Endothelial cell of umbilical vein (primary cell): ENCODE measurements at regions of chr10 and their contacts with region 1.

Region 1: GRCh38 chr10:5844345-5845048 is 31.3 kb upstream of the GDI2 start:
- DNase-seq: no peak
- H3K4me3 ChIP-seq: no peak overlapping the region
- H3K27ac ChIP-seq: no peak overlapping the region
- H3K4me1 ChIP-seq: peaks cover 8% of the 10 kb centered on the region
- H3K27me3 ChIP-seq: no peaks in the 10 kb centered on the region
- CTCF ChIP-seq: no peak
- POLR2A ChIP-seq: no peak

Region 2: DNA sequence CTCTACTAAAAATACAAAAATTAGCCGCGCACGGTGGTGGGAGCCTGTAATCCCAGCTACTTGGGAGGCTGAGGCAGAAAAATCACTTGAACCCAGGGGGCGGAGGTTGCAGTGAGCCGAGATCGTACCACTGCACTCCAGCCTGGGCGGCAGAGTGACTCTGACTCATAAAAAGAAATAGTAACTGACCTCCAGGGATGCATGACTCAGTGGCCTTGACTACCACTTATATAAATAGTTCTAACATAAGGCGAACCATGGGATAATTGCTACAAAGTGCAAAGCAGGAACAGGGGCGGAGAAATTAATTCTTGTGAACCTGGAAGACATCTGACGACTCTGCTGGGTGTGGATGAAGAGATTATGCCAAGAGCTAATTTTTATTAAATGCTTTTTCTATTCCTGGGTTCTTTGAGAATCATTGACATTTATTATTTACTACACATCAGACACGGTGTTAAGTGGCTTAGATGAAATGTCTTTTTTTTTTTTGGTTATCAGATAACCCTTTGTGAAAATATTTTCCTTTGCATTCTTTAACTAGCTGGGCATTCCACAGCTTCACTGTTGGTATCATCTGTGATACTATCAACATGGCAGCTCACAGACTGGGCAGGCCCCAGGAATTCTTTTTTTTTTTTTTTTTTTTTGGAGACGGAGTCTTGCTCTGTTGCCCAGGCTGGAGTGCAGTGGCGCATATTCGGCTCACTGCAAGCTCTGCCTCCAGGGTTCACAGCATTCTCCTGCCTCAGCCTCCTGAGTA is 17.0 kb after region 1 on chr10:
- CTCF ChIA-PET with region 1: interaction called, 4 read pairs
- POLR2A ChIA-PET with region 1: no interaction called
- dilution Hi-C with region 1: no loop called
- intact Hi-C with region 1: loop called (anchors 1 kb)
- DNase-seq: peak; percentile 78
- H3K4me3 ChIP-seq: no peak overlapping the region
- H3K27ac ChIP-seq: peak overlapping the region; percentile 35
- H3K4me1 ChIP-seq: peaks cover 8% of the 10 kb centered on the region
- H3K27me3 ChIP-seq: no peaks in the 10 kb centered on the region
- CTCF ChIP-seq: no peak
- POLR2A ChIP-seq: no peak